Activated CD8-positive, alpha-beta T cell treated with anti-CD3 and anti-CD28 coated beads, Interleukin-2, amount 10 ng/mL, durations not matched to agents 7 days and 5 days (primary cell): ENCODE measurements at regions of chr13 and their contacts with region 1.

Region 1: DNA sequence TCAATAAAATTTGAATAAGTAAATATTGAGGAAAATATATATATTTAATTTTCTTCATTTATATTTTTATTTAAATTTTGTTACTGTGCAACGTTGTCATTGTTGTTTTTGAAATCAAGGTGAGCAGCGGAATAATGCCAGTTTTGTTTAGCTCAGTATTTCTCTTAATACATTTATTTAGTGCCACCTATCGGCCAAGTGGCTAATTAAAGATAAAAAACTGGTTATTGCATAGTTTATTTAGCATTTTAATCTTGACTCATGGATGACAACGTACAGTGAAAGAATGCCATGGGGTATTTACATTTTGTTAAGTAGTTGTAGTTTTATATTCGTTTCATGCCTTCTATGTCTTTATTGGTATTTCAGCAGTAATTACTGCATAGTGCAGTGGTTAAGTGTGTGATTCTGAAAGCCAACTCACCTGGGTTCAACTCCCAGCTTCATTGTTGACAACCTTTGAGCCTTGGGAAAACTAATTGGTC is 265.9 kb downstream of the MYO16 start:
- DNase-seq: no peak
- ATAC-seq: no peak
- H3K4me3 Mint-ChIP-seq: no peak overlapping the region
- H3K27ac Mint-ChIP-seq: no peak overlapping the region
- H3K4me1 Mint-ChIP-seq: peaks cover 13% of the 10 kb centered on the region
- H3K27me3 Mint-ChIP-seq: peaks cover 4% of the 10 kb centered on the region

Region 2: GRCh38 chr13:108915634-108916512 is 20.6 kb after region 1 on chr13:
- CTCF ChIA-PET with region 1: interaction called, 15 read pairs
- POLR2A ChIA-PET with region 1: no interaction called
- DNase-seq: peak; percentile 84
- ATAC-seq: peak; percentile 95
- H3K4me3 Mint-ChIP-seq: peak overlapping the region; percentile 49
- H3K27ac Mint-ChIP-seq: peak overlapping the region; percentile 70
- H3K4me1 Mint-ChIP-seq: peaks cover 18% of the 10 kb centered on the region
- H3K27me3 Mint-ChIP-seq: peaks cover 11% of the 10 kb centered on the region